Astrocyte of the cerebellum (primary cell): ENCODE measurements at regions of chr3 and their contacts with region 1.

Region 1: GRCh38 chr3:169744366-169745054 is 20.4 kb downstream of the TERC start:
- DNase-seq: no peak
- H3K4me3 ChIP-seq: no peak overlapping the region
- CTCF ChIP-seq: peak; percentile 30

Region 2: DNA sequence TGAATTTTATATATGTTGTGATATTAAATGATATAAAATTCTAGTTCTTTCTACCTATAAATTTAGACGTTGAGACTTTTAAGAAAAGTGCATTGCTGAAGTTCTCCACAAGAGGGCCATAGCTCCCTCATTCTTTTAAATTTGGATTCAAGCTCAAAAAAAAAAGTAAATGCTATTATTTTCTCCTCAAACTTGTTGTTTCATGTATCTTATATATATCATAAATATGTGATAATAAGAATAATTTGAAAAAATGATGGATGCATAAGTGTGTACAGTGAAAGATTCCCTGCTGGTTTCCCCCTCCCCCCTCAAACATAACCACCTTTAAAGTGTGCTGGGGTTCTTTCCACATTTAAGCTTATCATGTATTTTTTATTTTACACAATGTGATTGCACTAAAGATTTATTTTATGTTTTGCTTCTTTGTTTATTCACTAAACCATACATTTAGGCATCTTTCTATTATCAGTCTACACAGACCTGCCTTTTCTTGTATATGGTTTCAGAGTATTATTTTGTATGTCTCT is 879.4 kb before region 1 on chr3:
- in situ Hi-C with region 1: loop called (anchors 25 kb)
- DNase-seq: peak; percentile 40
- H3K4me3 ChIP-seq: no peak overlapping the region
- CTCF ChIP-seq: peak; percentile 74

Region 3: DNA sequence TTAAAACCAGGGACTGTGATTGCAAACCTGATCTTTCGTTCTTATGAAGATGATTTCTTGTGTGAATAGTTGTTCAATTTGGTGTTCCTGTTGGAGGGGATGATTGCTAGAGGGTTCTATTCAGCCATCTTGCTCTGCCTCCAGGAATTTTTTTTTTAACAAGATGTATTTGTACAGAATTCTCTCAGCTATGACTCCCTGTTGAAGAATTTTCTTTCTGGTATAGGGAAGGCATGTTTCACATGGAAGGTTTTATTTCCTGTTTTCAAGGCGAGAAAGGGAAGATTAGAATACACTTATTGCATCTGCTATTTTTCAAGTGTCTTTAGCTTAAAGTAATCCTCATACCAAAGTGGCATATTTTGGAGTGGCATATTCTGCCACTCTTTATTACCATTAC is 73.8 kb after region 1 on chr3:
- in situ Hi-C with region 1: no loop called
- DNase-seq: no peak
- H3K4me3 ChIP-seq: no peak overlapping the region
- CTCF ChIP-seq: no peak